OCI-LY7 (cell line): ENCODE measurements at regions of chr13 and their contacts with region 1.

Region 1: GRCh38 chr13:32340914-32341313 is 25.6 kb downstream of the BRCA2 start:
- DNase-seq: no peak
- H3K4me3 ChIP-seq: no peak overlapping the region
- H3K27ac ChIP-seq: no peak overlapping the region
- H3K4me1 ChIP-seq: no peaks in the 10 kb centered on the region
- CTCF ChIP-seq: no peak

Region 2: GRCh38 chr13:33519561-33520467 is 1178.9 kb after region 1 on chr13:
- CTCF ChIA-PET with region 1: no interaction called
- POLR2A ChIA-PET with region 1: interaction called, 10 read pairs
- intact Hi-C with region 1: no loop called
- DNase-seq: no peak
- H3K4me3 ChIP-seq: no peak overlapping the region
- H3K27ac ChIP-seq: no peak overlapping the region
- H3K4me1 ChIP-seq: peaks cover 9% of the 10 kb centered on the region
- CTCF ChIP-seq: no peak